WTC11 (cell line): ENCODE measurements at regions of chr20 and their contacts with region 1.

Region 1: DNA sequence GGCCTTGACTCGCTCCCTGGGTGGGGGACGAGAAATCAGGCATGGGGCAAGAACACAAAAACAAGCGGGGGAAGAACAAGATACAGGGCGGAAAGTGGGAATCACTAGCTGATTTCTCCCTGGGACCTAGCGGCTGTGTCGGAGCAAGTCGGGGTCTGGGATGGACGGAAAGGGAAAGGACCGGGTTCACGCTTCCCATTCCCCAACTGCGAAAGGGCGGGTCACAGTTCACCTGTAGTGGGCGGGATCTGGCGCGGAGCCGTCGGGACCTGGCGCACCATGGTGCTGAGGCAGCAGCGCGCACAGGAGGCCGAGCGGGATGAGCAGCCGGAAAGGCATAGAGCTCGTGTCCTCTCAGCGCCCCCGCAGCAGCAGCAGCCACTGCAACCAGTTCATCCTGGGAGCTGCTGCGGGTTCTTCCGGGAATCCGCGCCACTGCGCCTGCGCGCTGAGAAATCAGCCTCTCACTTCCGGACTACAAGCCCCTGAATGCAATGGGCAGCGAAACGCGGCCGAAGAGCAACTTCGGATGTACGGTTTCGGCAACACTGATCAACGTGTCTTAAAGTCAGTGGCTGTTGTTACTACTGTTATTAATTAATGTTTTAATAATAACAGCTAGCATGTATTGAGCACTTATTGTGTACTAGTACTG is at the start of gene EDEM2:
- DNase-seq: peak; percentile 97
- ATAC-seq: peak; percentile 93
- H3K4me3 Mint-ChIP-seq: peak within 1 kb of the TSS; percentile 95
- H3K27ac Mint-ChIP-seq: peak within 1 kb of the TSS; percentile 98
- H3K4me1 Mint-ChIP-seq: peaks cover 18% of the 10 kb centered on the region
- H3K27me3 Mint-ChIP-seq: no peaks in the 10 kb centered on the region
- CTCF ChIP-seq: no peak
- total RNA-seq, gene EDEM2: 22.7 to 24.2 TPM (median 24.0 TPM) in 3 replicates

Region 2: DNA sequence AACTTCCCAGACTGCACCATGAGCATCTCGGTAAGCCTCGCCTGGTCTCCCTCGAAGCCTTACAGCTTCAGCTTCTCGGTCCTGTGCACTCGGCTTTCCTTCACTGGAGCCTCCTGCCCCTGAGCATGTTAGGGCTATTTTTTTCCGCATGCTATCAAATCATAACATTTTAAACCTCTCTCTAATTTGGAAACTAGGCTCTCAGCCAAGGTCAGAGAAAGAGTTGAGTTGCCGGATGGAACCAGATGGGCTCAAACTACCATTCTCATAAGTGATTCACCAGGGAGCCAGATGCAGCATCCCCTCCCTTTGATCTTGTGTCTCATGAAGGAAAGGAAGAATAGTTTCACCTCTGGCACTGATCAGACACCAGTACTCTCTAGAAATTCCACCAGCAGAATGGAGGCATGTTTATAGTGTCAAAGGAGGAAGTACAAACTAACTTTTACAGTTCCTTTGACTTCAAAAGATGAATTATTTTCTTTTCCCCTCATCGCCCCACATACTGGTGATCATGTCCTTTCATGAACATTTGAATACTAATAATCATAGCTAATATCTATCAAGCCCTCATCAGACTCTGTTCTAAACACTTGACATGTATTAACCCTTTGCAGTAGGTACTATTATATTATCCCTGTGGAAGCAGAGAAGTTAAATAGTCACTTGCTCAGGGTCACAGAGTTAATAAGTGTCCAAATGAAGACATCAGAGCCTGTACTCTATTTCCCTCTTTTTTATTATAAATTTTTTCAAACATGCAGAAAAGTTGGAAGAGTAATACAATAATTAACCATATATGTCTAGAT is 541.9 kb before region 1 on chr20:
- CTCF ChIA-PET with region 1: no interaction called
- POLR2A ChIA-PET with region 1: no interaction called
- DNase-seq: no peak
- ATAC-seq: no peak
- H3K4me3 Mint-ChIP-seq: no peak overlapping the region
- H3K27ac Mint-ChIP-seq: no peak overlapping the region; the same call in 1 of the 2 replicates
- H3K4me1 Mint-ChIP-seq: peaks cover 4% of the 10 kb centered on the region
- H3K27me3 Mint-ChIP-seq: no peaks in the 10 kb centered on the region
- CTCF ChIP-seq: no peak

Region 3: DNA sequence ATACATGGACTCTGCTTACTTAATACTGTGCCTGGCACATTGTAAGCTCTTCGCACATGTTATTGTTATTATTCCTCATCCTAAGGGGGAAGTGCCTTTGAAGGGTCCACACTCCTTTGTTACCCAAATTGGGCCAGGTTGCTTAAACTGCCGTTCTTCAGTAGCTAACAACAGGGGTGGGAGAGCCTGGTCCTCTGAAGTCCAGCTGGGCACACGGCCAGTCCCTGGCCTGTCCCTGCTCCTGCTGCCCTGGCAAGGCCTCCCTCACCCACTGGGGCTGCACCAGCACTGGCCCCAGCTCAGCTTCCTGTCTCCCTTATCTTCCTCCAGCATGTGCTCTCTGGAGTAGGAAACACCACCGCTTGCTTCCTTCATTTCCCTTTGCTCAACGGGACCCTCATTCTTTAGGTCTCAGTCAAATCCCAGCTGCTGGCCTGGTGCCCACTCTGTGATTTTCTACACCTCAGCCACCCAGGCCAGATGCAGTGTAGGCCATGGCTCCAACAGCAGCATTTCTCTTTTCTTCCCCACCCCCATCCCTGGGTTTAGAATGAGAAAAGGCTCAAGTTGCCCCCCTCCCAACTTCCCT is 19.3 kb after region 1 on chr20:
- CTCF ChIA-PET with region 1: interaction called, 37 read pairs
- POLR2A ChIA-PET with region 1: interaction called, 9 read pairs
- DNase-seq: no peak
- ATAC-seq: peak; percentile 80
- H3K4me3 Mint-ChIP-seq: peak overlapping the region; percentile 10
- H3K27ac Mint-ChIP-seq: peak overlapping the region; percentile 90
- H3K4me1 Mint-ChIP-seq: peaks cover 25% of the 10 kb centered on the region
- H3K27me3 Mint-ChIP-seq: no peaks in the 10 kb centered on the region; the same call in 1 of the 2 replicates
- CTCF ChIP-seq: no peak

Region 4: DNA sequence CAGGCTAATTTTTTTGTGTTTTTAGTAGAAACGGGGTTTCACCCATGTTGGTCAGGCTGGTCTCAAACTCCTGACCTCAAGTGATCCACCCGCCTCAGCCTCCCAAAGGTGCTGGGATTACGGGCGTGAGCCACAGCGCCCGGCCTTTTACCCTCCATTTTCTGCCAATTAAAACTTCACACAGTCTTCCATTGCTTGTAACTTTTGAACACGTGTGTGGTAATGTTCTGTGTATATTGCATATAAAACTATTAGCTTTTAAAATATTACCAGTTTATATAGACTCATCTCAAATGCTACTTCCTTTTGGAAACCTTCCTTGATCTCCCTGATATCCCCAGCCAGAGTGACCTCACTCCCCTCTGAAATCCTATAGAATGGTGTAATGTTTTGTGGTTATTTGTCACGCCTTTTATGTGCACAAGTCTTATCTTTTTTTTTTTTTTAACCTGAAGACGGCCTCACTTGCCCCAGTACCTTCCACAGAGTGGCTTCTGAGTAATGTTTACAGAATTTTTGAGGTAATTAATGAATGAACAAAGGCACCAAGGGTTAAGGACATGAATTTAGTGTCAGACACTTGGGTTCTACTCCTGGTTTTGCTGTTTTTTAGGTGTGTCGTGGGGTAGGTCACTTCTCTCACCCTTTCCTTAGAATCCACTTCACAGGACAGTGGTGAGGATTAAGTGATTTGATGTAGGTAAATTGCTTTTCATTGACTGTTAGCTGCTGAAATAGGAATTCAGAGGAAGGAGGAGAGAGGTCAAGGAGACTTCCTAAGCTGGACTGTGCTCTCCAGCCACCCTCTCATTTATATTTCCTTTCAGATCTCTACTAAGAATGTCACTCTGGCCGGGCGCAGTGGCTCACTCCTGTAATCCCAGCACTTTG is 68.3 kb after region 1 on chr20:
- CTCF ChIA-PET with region 1: interaction called, 72 read pairs
- POLR2A ChIA-PET with region 1: interaction called, 3 read pairs
- DNase-seq: no peak
- ATAC-seq: no peak
- H3K4me3 Mint-ChIP-seq: no peak overlapping the region
- H3K27ac Mint-ChIP-seq: no peak overlapping the region
- H3K4me1 Mint-ChIP-seq: no peaks in the 10 kb centered on the region
- H3K27me3 Mint-ChIP-seq: no peaks in the 10 kb centered on the region; the same call in 1 of the 2 replicates
- CTCF ChIP-seq: no peak

Region 5: GRCh38 chr20:35248641-35249475 is 101.8 kb after region 1 on chr20:
- CTCF ChIA-PET with region 1: interaction called, 10 read pairs
- POLR2A ChIA-PET with region 1: no interaction called
- DNase-seq: no peak
- ATAC-seq: no peak
- H3K4me3 Mint-ChIP-seq: no peak overlapping the region
- H3K27ac Mint-ChIP-seq: peak overlapping the region; percentile 32; the same call in 1 of the 2 replicates
- H3K4me1 Mint-ChIP-seq: peaks cover 33% of the 10 kb centered on the region
- H3K27me3 Mint-ChIP-seq: no peaks in the 10 kb centered on the region
- CTCF ChIP-seq: no peak

Region 6: GRCh38 chr20:35277531-35278395 is 130.7 kb after region 1 on chr20 and contains the start of gene MMP24OS:
- CTCF ChIA-PET with region 1: interaction called, 27 read pairs
- POLR2A ChIA-PET with region 1: interaction called, 4 read pairs
- DNase-seq: peak; percentile 92
- ATAC-seq: peak; percentile 88
- H3K4me3 Mint-ChIP-seq: peak within 1 kb of the TSS; percentile 96
- H3K27ac Mint-ChIP-seq: peak within 1 kb of the TSS; percentile 97
- H3K4me1 Mint-ChIP-seq: peaks cover 25% of the 10 kb centered on the region
- H3K27me3 Mint-ChIP-seq: no peaks in the 10 kb centered on the region
- CTCF ChIP-seq: no peak
- total RNA-seq, gene MMP24OS: 44.0 to 50.6 TPM (median 44.9 TPM) in 3 replicates

Region 7: DNA sequence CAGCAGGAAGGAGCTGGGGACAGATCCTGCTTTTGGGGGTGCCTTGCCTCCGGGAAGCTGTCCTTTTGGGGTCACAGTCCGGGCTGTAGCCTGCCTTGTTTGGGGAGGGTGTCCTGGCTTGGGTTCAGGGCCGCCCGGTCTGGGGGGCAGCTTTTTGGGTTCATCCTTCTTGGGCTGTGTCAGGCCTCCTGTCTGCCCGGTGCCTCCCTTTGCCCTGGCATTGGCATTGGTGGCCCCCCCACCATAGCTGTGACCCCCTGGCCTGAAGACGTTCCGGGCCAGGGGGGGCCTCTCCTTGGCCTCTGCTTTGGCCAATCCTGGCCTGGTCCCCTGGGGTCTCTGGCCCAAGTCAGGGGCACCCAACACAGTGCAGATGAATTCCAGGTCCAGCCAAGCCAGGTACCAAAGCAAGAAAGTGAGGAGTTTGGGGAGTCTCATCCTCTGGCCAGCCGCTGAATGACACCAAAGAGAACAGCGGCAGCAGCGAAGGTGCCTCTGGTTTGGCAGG is 290.5 kb after region 1 on chr20:
- CTCF ChIA-PET with region 1: interaction called, 10 read pairs
- POLR2A ChIA-PET with region 1: no interaction called
- DNase-seq: no peak
- ATAC-seq: no peak
- H3K4me3 Mint-ChIP-seq: no peak overlapping the region
- H3K27ac Mint-ChIP-seq: no peak overlapping the region
- H3K4me1 Mint-ChIP-seq: peaks cover 34% of the 10 kb centered on the region
- H3K27me3 Mint-ChIP-seq: no peaks in the 10 kb centered on the region; the same call in 1 of the 2 replicates
- CTCF ChIP-seq: no peak